Thyroid gland (tissue), 4 donors: ENCODE measurements at regions of chr11 and their contacts with region 1.

Region 1: DNA sequence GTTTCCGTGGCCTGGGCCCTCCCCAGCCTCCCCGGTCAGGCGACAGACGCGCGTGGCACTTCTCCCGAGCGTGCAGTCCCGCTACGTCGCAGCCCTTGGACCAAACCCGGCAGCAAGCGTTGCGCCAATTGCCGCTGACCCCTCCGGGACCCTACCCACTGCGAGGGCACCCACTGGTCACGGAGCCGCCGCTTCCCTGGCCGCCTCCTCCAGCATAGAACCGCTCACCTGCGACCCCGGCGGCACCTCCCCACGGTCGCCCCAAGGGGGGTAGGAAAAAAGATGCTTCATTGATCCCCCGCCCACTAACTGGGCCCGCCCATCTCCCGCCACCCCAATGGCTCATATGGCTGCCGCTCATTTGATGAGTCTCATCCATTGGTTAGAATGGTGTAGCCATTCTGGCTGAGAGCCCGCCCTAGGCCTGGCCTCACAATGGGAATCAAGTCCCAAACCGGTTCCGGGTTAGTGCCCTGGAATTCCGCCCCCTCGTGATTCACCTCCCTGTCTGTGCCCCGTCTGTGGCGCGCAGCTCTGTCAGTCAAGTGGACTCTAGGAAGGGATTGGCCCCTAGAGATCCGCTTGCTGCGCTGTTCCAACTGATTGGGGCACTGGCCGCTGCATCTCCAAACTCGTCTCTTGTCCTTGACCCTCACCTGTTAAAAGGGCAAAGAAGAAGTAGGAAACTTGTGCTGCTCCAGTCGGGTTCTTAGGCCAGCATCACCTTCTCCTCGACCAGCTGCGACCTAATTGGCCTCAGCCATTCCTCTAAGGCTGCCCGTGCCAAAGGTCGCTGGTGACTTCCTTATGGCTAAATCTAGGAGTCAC is at the start of gene MSANTD4:
- DNase-seq: peak; percentile 100
- H3K4me3 ChIP-seq: peak within 1 kb of the TSS; percentile 60 to 71 (median 64)
- H3K27ac ChIP-seq: peak within 1 kb of the TSS in 2 of 3 donors; percentile 54 to 73
- H3K4me1 ChIP-seq: peaks cover 20 to 21% of the 10 kb centered on the region in 2 donors
- H3K27me3 ChIP-seq: no peaks in the 10 kb centered on the region
- CTCF ChIP-seq: peak in 1 of 6 experiments; percentile 20
- POLR2A ChIP-seq: peak in 1 of 2 donors; percentile 54
- total RNA-seq, gene MSANTD4: 21.5 to 32.8 (median 30.5) TPM

Region 2: DNA sequence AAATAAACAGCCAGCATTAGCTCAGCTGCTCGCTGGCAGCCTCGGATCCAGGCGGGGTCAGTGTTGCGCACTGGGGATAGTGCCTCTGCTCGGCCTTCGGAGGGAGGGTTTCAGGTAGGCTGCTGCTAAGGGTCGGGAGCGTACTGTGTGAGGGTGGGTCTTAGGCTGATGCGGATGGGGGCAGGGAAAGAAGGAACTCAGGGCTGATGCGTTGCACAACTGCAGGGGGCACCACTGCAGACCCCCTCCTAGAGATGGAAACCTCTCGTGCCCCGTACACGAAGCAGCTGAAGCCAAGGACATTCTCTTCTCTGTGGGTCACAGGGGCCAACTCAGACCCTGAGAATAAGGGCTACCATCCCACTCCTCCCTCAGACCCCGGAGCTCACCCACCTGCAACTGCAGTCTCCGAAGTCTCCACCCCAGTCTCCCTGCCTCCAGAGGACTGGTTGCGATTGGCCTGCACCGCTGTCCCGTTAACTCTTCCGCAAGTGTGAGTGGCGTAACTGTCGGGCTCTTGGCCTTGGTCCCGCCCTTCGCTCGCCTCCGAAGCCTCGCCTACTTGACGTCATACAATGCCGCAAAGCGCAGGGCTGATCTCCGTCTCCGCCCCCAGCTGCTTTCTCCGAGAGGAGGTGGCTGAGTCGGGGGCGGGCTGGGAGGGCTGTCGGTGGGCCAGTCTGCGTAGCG is 54.9 kb after region 1 on chr11 and contains the start of gene KBTBD3:
- intact Hi-C with region 1: loop called (anchors 10 kb)
- DNase-seq: peak; percentile 99
- H3K4me3 ChIP-seq: peak within 1 kb of the TSS; percentile 75 to 94 (median 84)
- H3K27ac ChIP-seq: peak within 1 kb of the TSS; percentile 94 to 97 (median 96)
- H3K4me1 ChIP-seq: peaks cover 8 to 11% of the 10 kb centered on the region in 2 donors
- H3K27me3 ChIP-seq: no peaks in the 10 kb centered on the region
- CTCF ChIP-seq: peak in 4 of 6 experiments; percentile 32 to 61 (median 44)
- POLR2A ChIP-seq: peak; percentile 63 to 95
- total RNA-seq, gene KBTBD3: 12.1 to 16.6 (median 13.8) TPM